WTC11 (cell line): ENCODE measurements at regions of chr4 and their contacts with region 1.

Region 1: DNA sequence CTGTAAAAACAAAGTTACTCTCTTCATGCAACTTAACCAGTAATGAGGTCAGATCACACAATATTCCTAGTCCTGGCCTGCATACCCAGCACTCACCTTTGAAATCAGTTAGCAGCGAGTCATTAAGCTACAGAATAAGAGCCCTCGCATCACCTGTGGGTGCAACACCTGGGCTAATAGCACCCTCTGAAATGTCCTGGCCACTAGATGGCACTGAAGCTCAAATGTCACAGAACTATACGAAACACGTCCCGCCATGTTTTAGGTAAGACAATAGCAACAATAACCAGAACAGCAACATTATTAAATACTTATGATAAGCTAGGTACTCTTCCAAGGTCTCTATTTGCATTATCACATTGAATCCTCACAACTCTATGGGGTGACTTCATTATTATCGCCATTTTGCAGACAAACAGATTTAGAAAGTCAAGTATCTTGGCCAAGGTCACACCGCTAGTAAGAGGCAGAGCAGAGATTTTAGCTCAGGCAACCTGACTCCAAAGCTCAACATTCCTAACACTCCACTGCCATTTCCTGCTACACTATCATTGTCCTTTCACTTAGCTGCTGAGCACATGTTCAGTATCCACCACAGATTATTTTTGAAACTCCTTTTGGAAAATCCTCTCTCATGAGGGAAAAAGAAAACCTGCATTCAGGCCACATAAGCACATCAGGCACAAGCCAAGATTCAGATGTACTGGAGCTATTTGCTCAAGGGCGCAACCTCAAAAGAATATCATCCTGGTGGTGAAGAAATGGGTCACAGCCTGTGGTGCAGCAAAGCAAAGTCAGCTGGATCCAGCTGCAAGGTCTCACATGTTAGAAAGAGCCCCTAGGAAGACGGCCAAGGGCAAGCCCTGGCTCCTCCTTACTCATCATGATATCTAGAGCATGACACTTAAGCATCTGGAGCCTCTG is 59.5 kb upstream of the KDR start:
- DNase-seq: peak; percentile 60
- ATAC-seq: peak; percentile 62
- H3K4me3 Mint-ChIP-seq: no peak overlapping the region
- H3K27ac Mint-ChIP-seq: peak overlapping the region; percentile 47
- H3K4me1 Mint-ChIP-seq: peaks cover 82% of the 10 kb centered on the region
- H3K27me3 Mint-ChIP-seq: no peaks in the 10 kb centered on the region
- CTCF ChIP-seq: peak; percentile 33; the same call in 1 of the 2 replicates

Region 2: GRCh38 chr4:55012363-55013230 is 172.3 kb before region 1 on chr4:
- CTCF ChIA-PET with region 1: no interaction called
- POLR2A ChIA-PET with region 1: no interaction called
- DNase-seq: no peak
- ATAC-seq: no peak
- H3K4me3 Mint-ChIP-seq: no peak overlapping the region
- H3K27ac Mint-ChIP-seq: no peak overlapping the region
- H3K4me1 Mint-ChIP-seq: peaks cover 20% of the 10 kb centered on the region
- H3K27me3 Mint-ChIP-seq: no peaks in the 10 kb centered on the region
- CTCF ChIP-seq: no peak

Region 3: GRCh38 chr4:55125087-55125721 is 59.7 kb before region 1 on chr4 and contains the start of gene KDR:
- CTCF ChIA-PET with region 1: interaction called, 36 read pairs
- POLR2A ChIA-PET with region 1: interaction called, 4 read pairs
- DNase-seq: peak; percentile 84
- ATAC-seq: peak; percentile 93
- H3K4me3 Mint-ChIP-seq: peak within 1 kb of the TSS; percentile 81
- H3K27ac Mint-ChIP-seq: peak within 1 kb of the TSS; percentile 72
- H3K4me1 Mint-ChIP-seq: peaks cover 43% of the 10 kb centered on the region
- H3K27me3 Mint-ChIP-seq: peaks cover 7% of the 10 kb centered on the region; the same call in 1 of the 2 replicates
- CTCF ChIP-seq: no peak
- total RNA-seq, gene KDR: 80.8 to 88.7 TPM (median 87.2 TPM) in 3 replicates

Region 4: GRCh38 chr4:55157559-55158277 is 27.1 kb before region 1 on chr4:
- CTCF ChIA-PET with region 1: interaction called, 25 read pairs
- POLR2A ChIA-PET with region 1: no interaction called
- DNase-seq: peak; percentile 62
- ATAC-seq: peak; percentile 96
- H3K4me3 Mint-ChIP-seq: peak overlapping the region; percentile 62
- H3K27ac Mint-ChIP-seq: no peak overlapping the region
- H3K4me1 Mint-ChIP-seq: peaks cover 9% of the 10 kb centered on the region; the same call in 1 of the 2 replicates
- H3K27me3 Mint-ChIP-seq: peaks cover 12% of the 10 kb centered on the region
- CTCF ChIP-seq: no peak

Region 5: DNA sequence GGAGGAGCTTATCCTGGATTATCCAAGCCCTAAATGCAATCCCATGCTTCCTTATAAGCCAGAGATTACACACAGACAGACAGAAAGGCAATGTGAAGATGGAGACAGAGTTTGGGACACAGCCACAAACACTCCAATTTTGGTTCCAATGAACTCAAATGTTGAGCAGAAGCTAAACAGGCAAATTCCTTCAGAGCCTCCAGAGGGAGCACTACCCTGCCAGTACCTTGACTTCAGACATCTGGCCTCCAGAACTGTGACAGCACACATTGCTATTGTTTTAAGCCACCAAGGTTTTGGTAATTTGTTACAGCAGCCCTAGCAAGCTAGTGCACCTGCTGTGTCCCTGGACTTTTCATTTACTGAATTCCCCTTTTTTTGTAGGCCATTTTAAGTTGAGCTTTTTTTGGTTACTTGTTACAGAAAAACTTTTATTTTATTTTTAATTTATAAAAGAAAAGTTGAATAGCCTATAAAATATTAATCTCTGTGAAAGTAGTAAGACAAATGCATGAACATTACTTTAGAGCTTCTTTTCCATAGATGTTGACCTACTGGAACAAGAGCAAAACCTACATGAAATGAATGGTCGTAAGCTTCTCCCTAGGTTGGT is 127.7 kb after region 1 on chr4:
- CTCF ChIA-PET with region 1: interaction called, 16 read pairs
- POLR2A ChIA-PET with region 1: interaction called, 3 read pairs
- DNase-seq: peak; percentile 40
- ATAC-seq: peak; percentile 83
- H3K4me3 Mint-ChIP-seq: no peak overlapping the region
- H3K27ac Mint-ChIP-seq: no peak overlapping the region
- H3K4me1 Mint-ChIP-seq: peaks cover 7% of the 10 kb centered on the region
- H3K27me3 Mint-ChIP-seq: no peaks in the 10 kb centered on the region; the same call in 1 of the 2 replicates
- CTCF ChIP-seq: no peak

Region 6: DNA sequence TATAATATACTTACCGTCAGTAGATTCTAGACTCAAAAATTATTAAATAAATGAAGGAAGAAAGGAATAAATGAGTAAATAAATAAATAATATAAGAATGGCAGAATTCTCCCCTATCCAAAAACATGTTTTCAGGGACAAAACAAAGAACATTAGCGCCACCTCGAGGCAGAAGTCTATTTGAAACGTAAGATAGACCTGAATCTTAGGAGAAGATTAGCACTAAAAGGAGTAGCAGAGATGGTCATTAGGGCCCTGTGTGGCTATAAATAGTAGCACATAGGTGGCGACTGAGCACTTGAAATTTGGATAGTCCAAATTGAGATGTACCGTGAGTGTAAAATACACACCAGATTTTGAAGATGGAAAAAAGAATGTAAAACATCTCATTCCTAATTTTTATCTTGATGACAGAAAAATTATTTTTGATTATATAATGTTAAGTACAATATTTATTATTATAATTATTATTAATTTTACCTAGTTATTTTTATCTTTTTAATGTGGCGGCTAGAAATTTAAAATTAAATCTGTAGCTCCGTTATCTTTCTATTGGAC is 136.9 kb after region 1 on chr4:
- CTCF ChIA-PET with region 1: interaction called, 59 read pairs
- POLR2A ChIA-PET with region 1: no interaction called
- DNase-seq: peak; percentile 83
- ATAC-seq: peak; percentile 84
- H3K4me3 Mint-ChIP-seq: peak overlapping the region; percentile 26
- H3K27ac Mint-ChIP-seq: peak overlapping the region; percentile 85
- H3K4me1 Mint-ChIP-seq: peaks cover 50% of the 10 kb centered on the region
- H3K27me3 Mint-ChIP-seq: no peaks in the 10 kb centered on the region
- CTCF ChIP-seq: peak; percentile 41

Region 7: GRCh38 chr4:55345980-55346850 is 161.4 kb after region 1 on chr4 and contains the start of gene SRD5A3:
- CTCF ChIA-PET with region 1: interaction called, 25 read pairs
- POLR2A ChIA-PET with region 1: no interaction called
- DNase-seq: peak; percentile 84
- ATAC-seq: peak; percentile 89
- H3K4me3 Mint-ChIP-seq: peak within 1 kb of the TSS; percentile 79
- H3K27ac Mint-ChIP-seq: 0 out of 2 replicates have a peak within 1 kb of the TSS, but pooled peaks have one; percentile 53
- H3K4me1 Mint-ChIP-seq: peaks cover 27% of the 10 kb centered on the region
- H3K27me3 Mint-ChIP-seq: no peaks in the 10 kb centered on the region
- CTCF ChIP-seq: peak; percentile 80
- total RNA-seq, gene SRD5A3: 24.0 to 27.2 TPM (median 26.5 TPM) in 3 replicates